ENCODE measurements at regions of chr1 and their contacts with region 1.

Region 1: GRCh38 chr1:155308493-155309422 is at the start of gene FDPS:
- DNase-seq: peak; percentile 99
- ATAC-seq: peak; percentile 98
- H3K4me3 Mint-ChIP-seq: peak within 1 kb of the TSS; percentile 92
- H3K27ac Mint-ChIP-seq: peak within 1 kb of the TSS; percentile 99
- H3K4me1 Mint-ChIP-seq: peaks cover 29% of the 10 kb centered on the region
- H3K27me3 Mint-ChIP-seq: no peaks in the 10 kb centered on the region
- CTCF ChIP-seq: no peak
- total RNA-seq, gene FDPS: 293 to 316 TPM

Region 2: DNA sequence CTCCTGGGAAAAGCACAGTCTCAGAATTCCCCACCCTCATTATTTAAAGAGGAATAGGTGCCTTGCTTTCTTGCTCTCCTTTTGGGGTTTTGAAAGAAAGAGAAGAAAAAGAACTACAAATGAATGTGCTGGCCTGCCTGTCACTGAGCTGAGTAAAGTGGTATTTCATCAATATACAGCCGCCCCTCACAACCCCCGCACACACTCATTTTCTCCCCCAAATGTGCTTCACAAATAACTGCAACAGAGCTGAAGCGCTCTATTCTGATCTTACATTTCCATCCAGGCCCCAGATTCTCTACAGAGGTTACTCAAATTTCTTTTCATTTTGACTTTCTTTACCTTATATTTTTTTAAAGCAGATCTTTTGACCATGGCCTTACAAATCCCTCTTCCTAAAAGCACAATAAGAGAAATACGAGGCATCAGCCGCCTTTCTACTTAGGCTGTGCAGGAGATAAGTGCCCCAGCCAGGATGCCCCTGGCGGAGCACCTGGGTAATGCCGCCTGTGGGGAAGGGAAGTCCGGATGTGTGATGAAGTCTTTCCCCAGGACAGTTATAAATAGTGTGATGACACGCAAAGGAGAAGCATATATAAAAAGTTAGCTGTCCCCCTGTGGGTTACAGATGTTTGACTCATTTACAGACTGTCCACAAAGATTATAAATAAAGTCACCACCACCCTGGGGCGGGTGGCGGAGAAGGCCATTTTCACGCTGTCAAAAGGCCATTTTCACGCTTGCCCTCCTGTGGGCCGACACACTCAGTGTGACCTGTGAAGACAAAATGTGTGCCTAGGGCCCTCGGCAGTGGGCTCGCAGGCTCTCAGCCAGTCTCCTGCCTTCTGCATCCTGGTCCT is 445.2 kb before region 1 on chr1:
- CTCF ChIA-PET with region 1: no interaction called
- POLR2A ChIA-PET with region 1: no interaction called
- intact Hi-C with region 1: no loop called
- DNase-seq: peak; percentile 58
- ATAC-seq: peak; percentile 57
- H3K4me3 Mint-ChIP-seq: no peak overlapping the region
- H3K27ac Mint-ChIP-seq: peak overlapping the region; percentile 64
- H3K4me1 Mint-ChIP-seq: peaks cover 30% of the 10 kb centered on the region
- H3K27me3 Mint-ChIP-seq: peaks cover 13% of the 10 kb centered on the region
- CTCF ChIP-seq: peak; percentile 41

Region 3: GRCh38 chr1:155261852-155262673 is 46.7 kb before region 1 on chr1 and contains the start of gene SCAMP3:
- CTCF ChIA-PET with region 1: interaction called, 5 read pairs
- POLR2A ChIA-PET with region 1: interaction called, 3 read pairs
- intact Hi-C with region 1: loop called (anchors 5 kb)
- DNase-seq: peak; percentile 97
- ATAC-seq: peak; percentile 93
- H3K4me3 Mint-ChIP-seq: peak within 1 kb of the TSS; percentile 96
- H3K27ac Mint-ChIP-seq: peak within 1 kb of the TSS; percentile 89
- H3K4me1 Mint-ChIP-seq: peaks cover 29% of the 10 kb centered on the region
- H3K27me3 Mint-ChIP-seq: no peaks in the 10 kb centered on the region
- CTCF ChIP-seq: no peak
- total RNA-seq, gene SCAMP3: 81.3 to 97.2 TPM

Region 4: DNA sequence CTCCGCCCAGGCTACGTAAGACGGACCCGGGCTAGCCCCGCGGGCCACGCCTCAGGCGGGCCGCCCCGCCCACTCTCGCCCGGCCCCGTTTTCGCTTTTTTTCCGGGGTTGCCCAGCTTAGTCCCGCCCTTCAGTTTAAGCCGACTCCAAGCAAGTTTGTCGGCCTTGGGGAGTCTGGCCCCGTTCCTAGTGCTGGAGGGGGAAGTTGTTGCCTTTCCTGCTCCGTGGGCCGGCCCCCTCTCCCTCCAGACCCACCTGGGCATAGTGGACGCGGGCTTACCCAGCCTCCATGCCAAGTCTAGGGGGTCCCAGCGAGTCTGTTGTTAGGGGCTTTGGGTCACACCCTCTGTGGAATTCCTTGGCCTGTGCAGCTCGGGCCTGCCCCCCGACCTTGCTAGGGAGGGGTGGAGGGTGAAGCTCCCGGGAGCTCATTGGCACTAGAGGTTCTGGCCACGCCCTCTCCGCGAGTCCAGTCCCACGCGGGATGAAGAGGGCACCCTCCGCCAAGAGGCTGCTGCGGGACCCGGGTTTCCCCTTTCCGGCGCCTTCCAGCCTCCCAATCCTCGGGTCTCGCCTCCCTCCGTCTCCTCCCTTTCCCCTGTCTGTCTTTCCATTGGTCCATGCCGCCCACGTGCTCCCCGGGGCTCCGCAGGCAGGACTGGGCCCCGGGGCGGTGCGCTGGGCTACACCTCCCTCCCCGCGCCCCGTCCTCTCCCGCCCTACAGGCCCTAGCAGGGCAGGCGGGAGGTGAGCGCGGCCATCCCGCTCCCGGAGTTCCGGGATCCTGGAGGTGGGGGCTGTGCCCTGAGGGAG is 15.2 kb after region 1 on chr1:
- CTCF ChIA-PET with region 1: interaction called, 21 read pairs
- POLR2A ChIA-PET with region 1: interaction called, 31 read pairs
- intact Hi-C with region 1: no loop called
- DNase-seq: peak; percentile 95
- ATAC-seq: peak; percentile 78
- H3K4me3 Mint-ChIP-seq: peak overlapping the region; percentile 81
- H3K27ac Mint-ChIP-seq: peak overlapping the region; percentile 75
- H3K4me1 Mint-ChIP-seq: peaks cover 42% of the 10 kb centered on the region
- H3K27me3 Mint-ChIP-seq: no peaks in the 10 kb centered on the region
- CTCF ChIP-seq: no peak

Region 5: GRCh38 chr1:155437405-155437804 is 128.6 kb after region 1 on chr1:
- CTCF ChIA-PET with region 1: no interaction called
- POLR2A ChIA-PET with region 1: no interaction called
- intact Hi-C with region 1: no loop called
- DNase-seq: no peak
- ATAC-seq: no peak
- H3K4me3 Mint-ChIP-seq: no peak overlapping the region
- H3K27ac Mint-ChIP-seq: no peak overlapping the region
- H3K4me1 Mint-ChIP-seq: peaks cover 4% of the 10 kb centered on the region
- H3K27me3 Mint-ChIP-seq: no peaks in the 10 kb centered on the region
- CTCF ChIP-seq: no peak

Measured in activated CD8-positive, alpha-beta T cell treated with anti-CD3 and anti-CD28 coated beads for 36 hours (primary cell).